Mucosa of descending colon (tissue), 3 donors: ENCODE measurements at regions of chr11 and their contacts with region 1.

Region 1: GRCh38 chr11:22730319-22730718 is 63.9 kb downstream of the GAS2 start:
- DNase-seq: peak in 1 of 3 donors; percentile 42
- ATAC-seq: no peak
- H3K4me3 ChIP-seq: no peak overlapping the region
- H3K4me1 ChIP-seq: no peaks in the 10 kb centered on the region
- CTCF ChIP-seq: no peak

Region 2: GRCh38 chr11:22670830-22671229 is 59.5 kb before region 1 on chr11:
- intact Hi-C with region 1: loop called in 1 of 2 experiments (anchors 2 kb)
- DNase-seq: no peak
- ATAC-seq: peak; percentile 54
- H3K4me3 ChIP-seq: no peak overlapping the region
- H3K4me1 ChIP-seq: no peaks in the 10 kb centered on the region
- CTCF ChIP-seq: no peak

Region 3: GRCh38 chr11:22763166-22763565 is 32.8 kb after region 1 on chr11:
- intact Hi-C with region 1: no loop called
- DNase-seq: no peak
- ATAC-seq: no peak
- H3K4me3 ChIP-seq: no peak overlapping the region
- H3K4me1 ChIP-seq: no peaks in the 10 kb centered on the region
- CTCF ChIP-seq: no peak